ENCODE measurements at regions of chr6 and their contacts with region 1.

Region 1: GRCh38 chr6:46042355-46042999 is 26.8 kb upstream of the CLIC5 start:
- DNase-seq: no peak
- ATAC-seq: peak; percentile 53 to 77 (median 72)
- H3K4me3 ChIP-seq: no peak overlapping the region
- H3K27ac ChIP-seq: peak overlapping the region; percentile 6
- H3K4me1 ChIP-seq: peaks cover 43% of the 10 kb centered on the region
- H3K27me3 ChIP-seq: no peaks in the 10 kb centered on the region
- CTCF ChIP-seq: peak; percentile 62

Region 2: GRCh38 chr6:44185953-44186634 is 1856.4 kb before region 1 on chr6:
- intact Hi-C with region 1: loop called in 1 of 2 experiments (anchors 5 kb)
- DNase-seq: no peak
- ATAC-seq: no peak
- H3K4me3 ChIP-seq: no peak overlapping the region
- H3K27ac ChIP-seq: no peak overlapping the region
- H3K4me1 ChIP-seq: no peaks in the 10 kb centered on the region
- H3K27me3 ChIP-seq: no peaks in the 10 kb centered on the region
- CTCF ChIP-seq: no peak

Region 3: GRCh38 chr6:46129629-46130511 is 87.4 kb after region 1 on chr6 and contains the start of gene ENPP4:
- intact Hi-C with region 1: loop called in 1 of 2 experiments (anchors 10 kb)
- DNase-seq: peak; percentile 85 to 95
- ATAC-seq: peak; percentile 98 to 100 (median 99)
- H3K4me3 ChIP-seq: peak within 1 kb of the TSS; percentile 94
- H3K27ac ChIP-seq: peak within 1 kb of the TSS; percentile 81
- H3K4me1 ChIP-seq: peaks cover 34% of the 10 kb centered on the region
- H3K27me3 ChIP-seq: no peaks in the 10 kb centered on the region
- CTCF ChIP-seq: no peak
- total RNA-seq, gene ENPP4: 14.2 to 22.1 (median 20.5) TPM

Measured in psoas muscle (tissue), 8 donors.